Motor neuron (in vitro differentiated cells): ENCODE measurements at regions of chr3 and their contacts with region 1.

Region 1: GRCh38 chr3:58305882-58306711 is at the starts of genes HTD2 and RPP14:
- ATAC-seq: peak; percentile 85 to 96 (median 93)
- H3K4me3 ChIP-seq: peak within 1 kb of the TSS; percentile 70 to 92 (median 79)
- H3K27ac ChIP-seq: peak within 1 kb of the TSS; percentile 99 to 100
- H3K4me1 ChIP-seq: peaks cover 9 to 12% of the 10 kb centered on the region in 2 donors
- total RNA-seq, gene HTD2: 7.2 to 10.8 (median 9.0) TPM
- total RNA-seq, gene RPP14: 10.3 to 17.6 (median 14.3) TPM

Region 2: GRCh38 chr3:58177747-58178527 is 128.2 kb before region 1 on chr3:
- in situ Hi-C with region 1: loop called in 2 of 9 experiments (anchors 10 to 25 kb)
- ATAC-seq: peak; percentile 41 to 95 (median 86)
- H3K4me3 ChIP-seq: peak overlapping the region; percentile 24 to 39 (median 27)
- H3K27ac ChIP-seq: no peak overlapping the region
- H3K4me1 ChIP-seq: peaks cover 2 to 4% of the 10 kb centered on the region in 2 donors

Region 3: GRCh38 chr3:58188173-58188564 is 117.9 kb before region 1 on chr3:
- in situ Hi-C with region 1: loop called in 3 of 9 experiments (anchors 5 to 25 kb)
- ATAC-seq: peak in 3 of 8 experiments; percentile 67 to 84 (median 74)
- H3K4me3 ChIP-seq: no peak overlapping the region
- H3K27ac ChIP-seq: no peak overlapping the region
- H3K4me1 ChIP-seq: peaks cover 20 to 37% of the 10 kb centered on the region in 2 donors

Region 4: DNA sequence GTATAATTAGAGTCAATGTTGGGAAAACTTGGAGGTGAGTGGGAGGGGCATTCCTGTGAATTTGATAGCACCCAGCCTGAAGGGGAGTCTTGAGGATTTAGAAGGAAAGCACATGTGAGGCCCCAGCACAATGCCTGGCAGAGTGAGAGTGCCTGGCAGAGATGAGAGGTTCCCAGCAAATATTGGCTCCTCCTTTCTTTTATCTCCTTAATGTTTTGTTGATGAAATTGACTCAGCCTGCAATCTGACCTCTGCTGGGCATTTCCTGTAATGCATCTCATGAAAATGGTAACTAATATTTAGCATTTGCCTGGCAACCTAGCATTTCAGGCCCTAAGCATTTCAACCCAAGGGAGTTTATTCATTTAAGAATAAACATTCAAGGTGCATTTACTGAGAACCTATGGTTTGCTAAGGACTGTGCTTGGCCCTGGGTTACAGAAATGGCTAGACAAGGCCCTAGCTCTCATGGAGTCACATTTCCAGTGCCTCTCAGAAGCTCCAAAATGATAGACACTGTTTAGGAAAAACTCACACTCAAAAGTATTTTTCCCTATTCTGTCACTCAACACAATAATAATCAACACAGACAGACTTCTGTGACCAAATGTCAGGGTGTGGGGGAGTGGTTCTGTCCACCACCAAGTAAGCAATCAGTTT is 108.6 kb after region 1 on chr3:
- in situ Hi-C with region 1: loop called in 1 of 9 experiments (anchors 25 kb)
- ATAC-seq: peak in 7 of 8 experiments; percentile 36 to 93 (median 79)
- H3K4me3 ChIP-seq: no peak overlapping the region
- H3K27ac ChIP-seq: no peak overlapping the region
- H3K4me1 ChIP-seq: no peaks in the 10 kb centered on the region

Region 5: GRCh38 chr3:58532794-58533220 is 226.7 kb after region 1 on chr3:
- in situ Hi-C with region 1: loop called in 2 of 9 experiments (anchors 25 kb)
- ATAC-seq: peak; percentile 66 to 94 (median 88)
- H3K4me3 ChIP-seq: no peak overlapping the region
- H3K27ac ChIP-seq: no peak overlapping the region
- H3K4me1 ChIP-seq: peaks cover 20 to 21% of the 10 kb centered on the region in 2 donors